Psoas muscle (tissue), 8 donors: ENCODE measurements at regions of chr6 and their contacts with region 1.

Region 1: DNA sequence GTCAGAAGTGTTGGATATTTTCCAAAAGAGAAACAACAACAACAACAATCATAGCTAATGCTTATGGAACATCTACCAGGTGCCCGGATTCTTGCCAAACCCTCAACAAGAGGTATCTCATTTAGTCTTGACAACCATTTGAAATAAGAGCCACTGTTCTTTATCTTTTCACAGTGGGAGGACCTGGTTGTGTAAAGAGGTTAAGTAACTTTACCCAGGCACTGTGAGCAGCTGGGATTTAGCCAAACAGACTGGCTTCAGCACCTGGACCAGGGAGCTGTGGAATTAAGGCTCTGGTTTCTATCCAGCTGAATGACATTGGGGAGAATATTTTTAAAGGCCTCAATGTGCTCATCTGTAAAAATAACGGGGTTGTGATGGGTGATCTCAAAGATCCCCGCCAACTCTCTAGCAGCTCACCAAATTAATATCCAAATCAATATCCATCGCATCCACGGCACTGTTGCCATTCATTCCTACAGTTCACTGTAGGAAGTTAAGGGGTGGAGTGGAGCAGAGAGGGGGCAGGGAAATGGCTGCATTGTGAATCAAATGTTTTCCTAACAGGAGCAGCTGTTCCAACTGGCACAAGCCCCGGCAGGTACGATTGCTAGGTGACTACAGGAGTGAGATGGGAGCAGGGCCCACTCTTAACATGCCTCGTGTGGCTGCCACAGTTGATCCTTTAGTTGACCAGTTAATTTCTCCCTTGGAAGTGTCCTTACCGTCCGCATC is 61.8 kb downstream of the GCNT2 start:
- DNase-seq: no peak
- ATAC-seq: peak in 3 of 4 donors; percentile 70 to 73 (median 70)
- H3K4me3 ChIP-seq: no peak overlapping the region
- H3K27ac ChIP-seq: no peak overlapping the region
- H3K4me1 ChIP-seq: no peaks in the 10 kb centered on the region
- H3K27me3 ChIP-seq: peaks cover 0 to 4% (median 0%) of the 10 kb centered on the region in 3 donors
- CTCF ChIP-seq: no peak

Region 2: DNA sequence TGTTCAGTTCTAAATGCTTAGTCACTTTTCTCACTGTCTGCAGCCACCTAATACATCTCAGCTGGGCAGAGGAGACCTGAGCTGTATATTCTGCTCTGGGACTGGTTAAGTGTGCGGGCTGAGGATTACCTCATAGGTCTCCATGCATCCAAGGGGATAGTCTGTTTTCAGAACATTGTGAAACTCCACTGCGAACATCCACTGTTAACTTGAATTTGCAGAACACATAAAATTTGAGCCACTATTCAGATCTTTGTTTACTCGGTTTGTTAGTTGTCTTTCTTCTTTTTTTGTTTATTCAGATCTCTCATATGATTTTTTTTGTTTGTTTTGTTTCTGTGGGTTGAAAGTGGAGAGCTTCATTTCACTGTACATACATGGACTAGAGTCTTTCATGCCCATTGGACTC is 1115.1 kb before region 1 on chr6:
- intact Hi-C with region 1: loop called in 1 of 2 experiments (anchors 10 kb)
- DNase-seq: no peak
- ATAC-seq: no peak
- H3K4me3 ChIP-seq: no peak overlapping the region
- H3K27ac ChIP-seq: no peak overlapping the region
- H3K4me1 ChIP-seq: no peaks in the 10 kb centered on the region
- H3K27me3 ChIP-seq: no peaks in the 10 kb centered on the region
- CTCF ChIP-seq: no peak

Region 3: DNA sequence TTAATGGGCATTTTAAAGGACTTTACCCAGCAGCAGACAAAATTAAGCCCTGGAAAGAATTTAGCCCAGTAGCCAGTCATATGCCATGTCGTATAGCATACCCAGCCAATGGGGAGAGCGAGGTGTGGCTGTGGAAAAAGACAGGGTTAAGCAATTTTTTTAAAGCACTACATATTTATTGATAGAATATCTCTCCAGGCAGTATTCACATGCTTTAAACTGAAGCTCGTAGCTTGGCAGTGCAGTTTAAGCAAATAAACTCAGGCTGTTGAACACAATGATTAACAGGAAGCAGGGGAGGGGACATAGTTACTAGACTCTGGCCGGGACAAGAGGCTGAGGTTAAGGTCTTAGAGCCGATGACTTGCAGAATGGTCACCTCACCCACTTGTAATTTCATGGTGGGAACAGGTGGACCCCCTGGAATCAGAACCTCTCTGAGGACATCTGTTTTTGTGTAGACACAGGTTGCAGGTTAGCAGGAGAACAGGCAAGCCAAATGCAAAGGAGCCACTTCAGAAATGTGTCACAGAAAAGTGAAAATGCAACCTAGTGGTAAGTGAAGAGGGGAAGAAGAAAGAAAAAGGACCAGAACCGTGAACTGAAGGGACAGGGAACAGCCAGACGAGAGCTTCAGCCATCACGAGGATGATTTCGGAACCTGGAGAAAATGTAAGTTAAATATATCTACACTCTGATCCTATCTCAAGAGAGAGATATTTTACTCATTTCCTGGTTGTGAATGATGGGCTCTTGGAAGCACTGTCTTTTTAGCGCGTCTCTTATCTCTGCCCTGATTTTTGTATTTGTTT is 54.6 kb before region 1 on chr6:
- intact Hi-C with region 1: no loop called
- DNase-seq: no peak
- ATAC-seq: peak in 3 of 4 donors; percentile 34 to 53 (median 38)
- H3K4me3 ChIP-seq: peak overlapping the region; percentile 53
- H3K27ac ChIP-seq: peak overlapping the region; percentile 61
- H3K4me1 ChIP-seq: no peaks in the 10 kb centered on the region
- H3K27me3 ChIP-seq: no peaks in the 10 kb centered on the region
- CTCF ChIP-seq: no peak

Region 4: DNA sequence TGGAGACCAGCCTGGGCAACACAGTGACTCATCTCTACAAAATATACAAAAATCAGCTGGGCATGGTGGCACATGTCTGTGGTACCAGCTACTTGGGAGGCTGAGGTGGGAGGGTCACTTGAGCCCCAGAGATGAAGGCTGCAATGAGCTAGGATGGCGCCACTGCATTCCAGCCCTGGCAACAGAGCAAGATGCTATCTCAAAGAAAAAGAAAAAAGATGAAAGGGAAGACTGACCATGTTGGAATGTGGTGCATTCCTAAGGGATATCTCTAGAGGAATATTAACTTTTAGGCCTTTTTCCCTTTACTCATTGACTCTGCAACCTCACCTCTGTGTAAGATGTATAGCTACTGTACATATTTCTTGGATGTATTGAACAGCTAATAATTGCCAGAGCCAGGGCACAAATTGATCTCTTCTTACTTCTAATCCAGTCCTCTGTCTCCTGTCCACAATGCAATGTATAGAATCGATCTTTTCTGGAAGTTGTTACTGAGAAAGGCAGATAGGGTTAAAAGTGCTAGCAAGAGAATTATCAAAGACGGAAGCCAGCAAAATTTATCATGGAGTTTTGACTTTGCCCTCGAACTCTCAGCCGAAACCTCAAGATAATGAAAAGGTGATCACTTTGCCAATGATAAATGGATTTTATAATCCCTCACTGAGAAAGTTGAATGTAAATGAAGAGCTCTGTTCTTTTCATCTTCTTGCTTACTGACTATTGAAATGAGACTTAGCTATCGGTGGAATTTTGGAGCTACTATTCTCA is 15.5 kb before region 1 on chr6:
- intact Hi-C with region 1: no loop called
- DNase-seq: no peak
- ATAC-seq: no peak
- H3K4me3 ChIP-seq: no peak overlapping the region
- H3K27ac ChIP-seq: no peak overlapping the region
- H3K4me1 ChIP-seq: no peaks in the 10 kb centered on the region
- H3K27me3 ChIP-seq: no peaks in the 10 kb centered on the region
- CTCF ChIP-seq: no peak